ENCODE measurements at regions of chr11 and their contacts with region 1.

Region 1: GRCh38 chr11:86440305-86440716 is 65.6 kb downstream of the CCDC81 start:
- DNase-seq: no peak
- H3K4me3 Mint-ChIP-seq: no peak overlapping the region
- H3K27ac Mint-ChIP-seq: peak overlapping the region; percentile 74
- H3K4me1 Mint-ChIP-seq: peaks cover 47% of the 10 kb centered on the region
- H3K27me3 Mint-ChIP-seq: no peaks in the 10 kb centered on the region

Region 2: GRCh38 chr11:86418917-86419316 is 21.4 kb before region 1 on chr11:
- intact Hi-C with region 1: loop called (anchors 2 kb)
- DNase-seq: no peak
- H3K4me3 Mint-ChIP-seq: no peak overlapping the region
- H3K27ac Mint-ChIP-seq: no peak overlapping the region
- H3K4me1 Mint-ChIP-seq: peaks cover 9% of the 10 kb centered on the region
- H3K27me3 Mint-ChIP-seq: no peaks in the 10 kb centered on the region

Region 3: GRCh38 chr11:86515297-86516094 is 75.2 kb after region 1 on chr11:
- intact Hi-C with region 1: no loop called
- DNase-seq: no peak
- H3K4me3 Mint-ChIP-seq: no peak overlapping the region
- H3K27ac Mint-ChIP-seq: no peak overlapping the region
- H3K4me1 Mint-ChIP-seq: peaks cover 14% of the 10 kb centered on the region
- H3K27me3 Mint-ChIP-seq: no peaks in the 10 kb centered on the region

Measured in activated CD4-positive, alpha-beta T cell treated with anti-CD3 and anti-CD28 coated beads, Interleukin-2, amount 10 ng/mL, durations not matched to agents 24 days and 14 days (primary cell).